Naive thymus-derived CD8-positive, alpha-beta T cell (primary cell): ENCODE measurements at regions of chr15 and their contacts with region 1.

Region 1: DNA sequence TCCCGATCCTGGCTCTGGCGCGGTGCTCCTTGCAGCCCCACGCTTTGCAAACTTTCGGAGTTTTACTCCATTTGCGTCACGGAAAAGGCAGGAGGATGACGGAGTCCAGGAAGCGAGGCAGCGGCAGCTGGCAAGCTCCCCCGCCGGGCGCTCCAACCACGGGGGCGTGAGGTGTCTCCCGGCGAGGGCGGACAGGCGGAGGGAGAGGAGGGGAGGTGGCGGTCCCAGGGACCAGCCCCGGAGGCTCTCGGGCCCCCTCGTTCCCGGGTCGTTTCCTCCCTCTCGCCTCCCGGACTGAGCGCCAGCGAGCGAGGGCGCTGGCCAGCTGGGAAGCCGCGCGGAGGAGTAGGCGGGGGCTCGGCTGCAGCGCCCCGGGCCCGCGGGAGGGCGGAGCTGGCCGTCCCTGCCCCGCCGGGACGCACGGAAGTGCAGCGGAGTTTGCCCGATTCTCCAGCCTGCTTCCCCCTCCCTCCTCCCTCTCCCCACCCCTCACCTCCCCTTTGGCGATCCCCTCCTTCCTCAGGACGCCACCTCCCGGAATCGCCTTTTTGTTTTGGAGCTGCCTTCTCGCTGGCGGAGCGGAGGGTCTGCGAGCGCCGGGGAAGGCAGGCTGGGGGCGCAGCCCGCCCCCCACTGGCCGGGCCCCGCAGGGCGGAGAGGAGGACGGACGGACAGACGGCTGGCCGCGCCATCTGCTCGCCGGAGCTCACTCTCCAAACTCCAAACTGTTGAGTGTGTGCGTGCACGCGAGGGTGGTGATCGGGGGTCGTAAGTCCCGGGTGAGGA is at the start of gene SNX33:
- DNase-seq: peak in 9 of 10 donors; percentile 12 to 68 (median 48)
- ATAC-seq: peak; percentile 70 to 83
- H3K4me3 Mint-ChIP-seq: peak within 1 kb of the TSS; percentile 79 to 93 (median 87)
- H3K27ac Mint-ChIP-seq: peak within 1 kb of the TSS; percentile 61 to 88 (median 78)
- H3K4me1 Mint-ChIP-seq: peaks cover 11 to 37% (median 33%) of the 10 kb centered on the region in 4 donors
- H3K27me3 Mint-ChIP-seq: no peaks in the 10 kb centered on the region
- polyA plus RNA-seq, gene SNX33: 0.05 to 0.44 (median 0.30) TPM

Region 2: DNA sequence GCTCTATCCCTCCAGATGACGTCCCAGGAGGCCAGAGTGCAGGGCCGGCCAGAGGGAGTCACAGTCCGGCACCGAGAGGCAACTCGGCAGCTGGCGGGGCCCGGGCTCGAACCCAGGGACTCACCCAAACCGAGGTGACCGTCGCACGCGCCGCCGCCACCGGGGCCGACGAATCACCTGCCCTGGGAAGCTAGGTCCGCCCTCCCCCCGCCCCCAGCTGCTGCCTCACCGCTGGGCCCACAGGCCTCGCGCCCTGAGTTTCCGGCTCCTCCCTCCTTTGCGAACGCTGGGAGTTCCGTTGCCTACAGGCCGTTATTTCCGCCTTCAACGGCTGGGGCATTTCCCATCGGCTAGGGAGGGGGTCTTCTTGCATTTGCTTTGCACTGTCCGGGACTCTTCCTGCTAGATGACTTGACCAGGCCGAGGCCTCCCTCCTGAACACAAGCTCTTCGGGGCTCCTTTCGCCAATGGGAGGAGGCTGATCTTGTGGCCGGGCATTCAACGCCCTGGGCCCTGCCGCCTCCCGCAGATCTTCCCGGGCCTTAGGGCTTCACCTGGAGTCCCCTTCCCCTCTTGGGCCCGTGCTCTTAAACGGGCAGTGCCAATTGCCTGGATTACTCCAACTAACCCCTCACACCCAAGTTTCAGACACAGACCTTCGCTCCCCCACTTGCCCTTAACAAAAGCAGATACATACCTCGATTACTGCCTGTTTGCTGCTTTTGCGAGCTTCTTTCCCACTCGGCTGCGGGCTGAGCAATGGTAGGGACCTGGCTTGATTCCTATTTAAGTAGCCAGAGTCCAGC is 21.8 kb before region 1 on chr15 and contains the start of gene SNUPN:
- POLR2A ChIA-PET with region 1: interaction called, 12 read pairs
- DNase-seq: peak; percentile 83 to 96 (median 90)
- ATAC-seq: peak; percentile 89 to 92
- H3K4me3 Mint-ChIP-seq: peak within 1 kb of the TSS; percentile 90 to 100 (median 96)
- H3K27ac Mint-ChIP-seq: peak within 1 kb of the TSS; percentile 91 to 100 (median 98)
- H3K4me1 Mint-ChIP-seq: peaks cover 16 to 39% (median 32%) of the 10 kb centered on the region in 4 donors
- H3K27me3 Mint-ChIP-seq: no peaks in the 10 kb centered on the region
- polyA plus RNA-seq, gene SNUPN: 20.1 to 33.7 (median 21.7) TPM